ENCODE measurements at regions of chr1 and their contacts with region 1.

Region 1: DNA sequence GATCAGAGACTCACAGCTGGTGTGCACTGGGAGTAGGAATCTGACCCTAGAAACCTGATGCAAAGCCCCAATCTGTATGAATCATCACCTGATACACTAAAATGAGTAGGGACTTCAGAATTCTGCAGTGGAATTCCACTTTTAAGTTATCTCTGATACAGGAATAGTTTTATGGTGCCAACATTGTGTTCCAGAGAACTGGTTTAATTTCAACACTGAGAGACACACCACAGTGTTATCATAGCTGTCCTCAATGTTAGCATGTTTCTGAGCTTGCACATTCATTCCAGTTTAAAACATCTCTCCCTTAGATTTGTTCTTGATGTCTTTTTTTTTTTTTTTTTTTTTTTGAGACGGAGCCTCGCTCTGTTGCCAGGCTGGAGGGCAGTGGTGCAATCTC is 7.1 kb downstream of the UTS2 start:
- DNase-seq: no peak
- ATAC-seq: no peak
- H3K4me3 ChIP-seq: no peak overlapping the region
- H3K27ac ChIP-seq: no peak overlapping the region
- H3K4me1 ChIP-seq: no peaks in the 10 kb centered on the region
- H3K27me3 ChIP-seq: no peaks in the 10 kb centered on the region
- CTCF ChIP-seq: no peak

Region 2: GRCh38 chr1:7810395-7810794 is 35.4 kb before region 1 on chr1:
- intact Hi-C with region 1: loop called in 1 of 2 experiments (anchors 2 kb)
- DNase-seq: peak in 1 of 2 donors; percentile 38
- ATAC-seq: peak; percentile 52 to 92 (median 56)
- H3K4me3 ChIP-seq: no peak overlapping the region
- H3K27ac ChIP-seq: no peak overlapping the region
- H3K4me1 ChIP-seq: no peaks in the 10 kb centered on the region
- H3K27me3 ChIP-seq: no peaks in the 10 kb centered on the region
- CTCF ChIP-seq: no peak

Region 3: DNA sequence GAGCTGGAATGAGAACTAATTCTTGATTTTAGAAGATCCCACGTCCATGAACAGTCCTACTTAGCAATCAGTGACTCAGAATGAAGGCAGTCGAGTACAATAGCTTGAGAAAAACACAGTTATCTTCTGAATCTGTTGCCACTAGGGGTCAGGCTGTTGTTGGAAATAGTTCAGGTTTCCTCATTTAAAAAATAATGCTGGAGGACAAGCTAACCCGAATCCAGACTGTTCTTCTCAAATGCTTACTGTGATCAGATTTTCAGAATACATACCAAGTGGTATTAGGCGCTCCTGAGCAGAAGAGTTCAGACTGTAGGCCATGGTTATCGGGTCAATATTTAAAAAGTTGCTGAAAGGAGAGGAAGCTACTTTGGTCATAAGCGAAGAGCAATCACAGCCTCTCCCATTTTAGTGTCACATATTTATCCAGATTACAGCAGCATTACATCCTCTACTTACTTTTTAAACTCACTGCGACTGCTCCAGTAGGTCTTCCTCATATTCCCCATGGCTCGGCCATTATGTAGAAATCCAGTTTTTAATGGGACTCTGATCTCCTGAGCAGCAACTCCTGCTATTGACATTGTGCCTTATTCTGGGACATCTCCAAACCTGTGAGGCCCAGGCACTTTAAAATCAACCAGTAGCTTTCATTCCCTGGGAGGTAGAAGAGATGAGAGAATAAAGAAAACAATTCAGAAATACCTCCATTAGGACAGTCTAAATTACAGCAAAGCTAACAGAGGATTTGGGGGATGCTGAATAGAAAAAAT is 169.5 kb after region 1 on chr1:
- intact Hi-C with region 1: no loop called
- DNase-seq: no peak
- ATAC-seq: peak in 2 of 4 donors; percentile 20 to 30
- H3K4me3 ChIP-seq: peak overlapping the region; percentile 1
- H3K27ac ChIP-seq: peak overlapping the region; percentile 62
- H3K4me1 ChIP-seq: peaks cover 78% of the 10 kb centered on the region
- H3K27me3 ChIP-seq: no peaks in the 10 kb centered on the region
- CTCF ChIP-seq: peak; percentile 71

Measured in psoas muscle (tissue), 8 donors.